PC-3 (cell line): ENCODE measurements at regions of chr7 and their contacts with region 1.

Region 1: DNA sequence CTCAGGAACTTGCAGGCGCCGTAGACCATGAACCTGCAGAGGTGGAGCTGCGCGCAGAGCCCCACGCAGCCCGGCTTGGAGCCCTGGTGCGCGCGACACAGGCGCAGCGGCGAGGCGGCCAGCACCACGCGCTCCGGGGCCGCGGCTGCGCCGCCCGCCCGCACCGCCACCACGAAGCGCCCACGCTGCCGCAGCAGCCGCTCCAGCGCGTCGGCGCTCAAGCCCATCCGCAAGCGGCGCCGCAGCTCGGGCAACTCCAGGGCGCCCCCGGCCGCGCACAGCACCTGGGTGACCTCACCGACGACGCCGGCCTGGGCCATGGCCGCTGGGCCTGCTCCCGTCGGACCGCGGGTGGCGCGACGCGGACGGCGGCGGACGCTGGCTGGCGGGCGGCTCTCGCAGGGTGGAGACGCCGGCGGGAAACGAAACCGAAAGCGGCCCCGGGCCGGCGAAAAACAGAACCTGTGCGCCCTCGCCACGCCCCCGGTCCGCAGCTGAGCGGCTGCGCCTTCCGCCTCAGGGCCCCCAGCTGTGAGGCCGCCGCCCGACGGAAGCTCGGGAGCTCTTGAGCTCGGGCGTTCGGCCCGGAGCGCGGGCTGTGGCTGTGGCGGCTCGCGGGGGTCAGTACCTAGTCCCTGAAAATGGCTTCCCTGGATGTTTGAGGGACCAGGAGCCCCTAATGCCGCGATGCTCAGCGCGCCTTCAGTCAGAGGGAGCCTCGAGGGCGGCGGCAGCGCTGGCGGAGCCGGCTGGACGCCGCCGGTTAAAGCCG is at the start of gene PARP12:
- DNase-seq: peak; percentile 70
- ATAC-seq: peak; percentile 50
- H3K4me3 ChIP-seq: peak within 1 kb of the TSS; percentile 80
- H3K27ac ChIP-seq: peak within 1 kb of the TSS; percentile 95
- H3K4me1 ChIP-seq: peaks cover 41% of the 10 kb centered on the region
- H3K27me3 ChIP-seq: no peaks in the 10 kb centered on the region
- CTCF ChIP-seq: no peak
- total RNA-seq, gene PARP12: 25.5 and 28.1 TPM in 2 replicates

Region 2: GRCh38 chr7:139936760-139937310 is 125.9 kb before region 1 on chr7:
- CTCF ChIA-PET with region 1: no interaction called
- POLR2A ChIA-PET with region 1: no interaction called
- intact Hi-C with region 1: no loop called
- DNase-seq: peak; percentile 52
- ATAC-seq: peak; percentile 76
- H3K4me3 ChIP-seq: no peak overlapping the region
- H3K27ac ChIP-seq: no peak overlapping the region
- H3K4me1 ChIP-seq: peaks cover 7% of the 10 kb centered on the region
- H3K27me3 ChIP-seq: no peaks in the 10 kb centered on the region
- CTCF ChIP-seq: no peak

Region 3: DNA sequence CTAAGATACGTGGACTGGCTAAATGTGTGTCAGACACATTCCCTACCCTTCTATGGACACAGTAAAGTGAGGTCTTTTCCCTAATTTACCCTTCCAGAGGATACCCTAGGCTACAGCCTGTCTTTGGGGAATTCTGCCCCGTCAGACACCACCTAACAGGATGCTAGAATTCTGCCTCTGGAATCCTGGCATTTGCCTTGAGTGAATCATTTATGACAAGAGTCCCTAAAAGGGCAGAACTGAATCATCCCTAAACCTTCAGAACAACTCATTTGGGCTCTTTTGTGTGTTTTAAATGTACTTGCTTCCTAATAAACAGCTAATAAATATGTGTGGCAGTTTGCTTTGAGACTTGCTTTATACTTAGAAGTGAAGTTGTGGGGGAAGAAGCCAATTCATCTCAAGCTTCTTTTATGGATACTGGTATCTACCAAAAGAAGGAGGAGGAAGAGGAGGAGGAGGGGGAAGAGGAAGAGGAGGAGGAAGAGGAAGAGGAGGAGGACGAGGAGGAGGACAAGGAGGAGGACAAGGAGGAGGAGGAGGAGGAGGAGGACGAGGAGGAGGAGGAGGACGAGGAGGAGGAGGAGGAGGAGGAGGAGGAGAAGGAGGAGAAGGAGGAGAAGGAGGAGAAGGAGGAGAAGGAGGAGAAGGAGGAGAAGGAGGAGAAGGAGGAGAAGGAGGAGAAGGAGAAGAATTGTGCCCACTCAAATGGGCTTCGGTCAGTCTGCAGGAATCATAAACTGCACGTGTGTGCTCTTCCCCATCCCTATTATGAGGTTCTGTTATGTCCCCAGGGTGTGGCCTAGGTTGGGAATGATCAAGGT is 27.1 kb before region 1 on chr7:
- CTCF ChIA-PET with region 1: no interaction called
- POLR2A ChIA-PET with region 1: no interaction called
- intact Hi-C with region 1: loop called (anchors 1 kb)
- DNase-seq: peak; percentile 89
- ATAC-seq: peak; percentile 86
- H3K4me3 ChIP-seq: no peak overlapping the region
- H3K27ac ChIP-seq: peak overlapping the region; percentile 45
- H3K4me1 ChIP-seq: peaks cover 33% of the 10 kb centered on the region
- H3K27me3 ChIP-seq: no peaks in the 10 kb centered on the region
- CTCF ChIP-seq: no peak

Region 4: GRCh38 chr7:140121326-140121725 is 58.6 kb after region 1 on chr7:
- CTCF ChIA-PET with region 1: no interaction called
- POLR2A ChIA-PET with region 1: no interaction called
- intact Hi-C with region 1: no loop called
- DNase-seq: no peak
- ATAC-seq: no peak
- H3K4me3 ChIP-seq: no peak overlapping the region
- H3K27ac ChIP-seq: no peak overlapping the region
- H3K4me1 ChIP-seq: no peaks in the 10 kb centered on the region
- H3K27me3 ChIP-seq: no peaks in the 10 kb centered on the region
- CTCF ChIP-seq: no peak

Region 5: DNA sequence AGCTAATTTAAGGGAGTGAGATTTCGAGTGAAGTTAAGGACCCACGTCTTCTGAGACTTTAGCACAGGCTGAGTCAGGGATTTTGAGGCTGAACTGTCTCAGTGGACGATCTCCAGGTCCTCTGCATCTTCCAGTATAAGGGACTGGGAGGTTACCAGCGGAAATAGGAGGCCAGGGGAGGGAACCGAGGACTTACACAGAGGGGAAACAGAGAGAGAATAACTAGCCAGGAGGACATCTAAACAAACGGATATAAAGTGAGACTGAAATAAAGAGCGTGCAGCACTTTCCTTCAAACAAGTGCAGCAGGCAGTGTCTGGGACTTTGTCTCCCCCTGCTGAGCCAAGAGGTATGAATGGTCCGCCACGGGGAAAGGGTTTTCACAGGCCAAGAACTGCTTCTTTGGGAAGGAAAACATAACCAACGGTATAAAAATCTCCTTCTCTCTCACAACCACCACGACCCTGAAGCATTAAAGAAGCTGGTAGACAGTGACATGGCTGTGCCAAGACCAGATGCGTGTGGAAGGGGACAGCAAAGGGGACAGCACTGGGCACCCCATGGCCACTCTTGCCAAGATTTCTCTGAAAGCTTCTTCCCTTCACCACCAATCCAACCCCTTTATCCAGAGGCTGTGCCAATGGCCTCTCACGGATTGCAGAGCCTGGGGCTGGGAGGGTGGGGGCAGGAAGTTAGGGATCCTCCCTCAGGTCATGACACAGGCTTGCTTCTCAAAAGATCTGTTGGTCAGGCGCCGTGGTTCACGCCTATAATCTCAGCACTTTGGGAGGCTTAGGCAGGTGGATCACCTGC is 263.6 kb after region 1 on chr7:
- CTCF ChIA-PET with region 1: no interaction called
- POLR2A ChIA-PET with region 1: no interaction called
- intact Hi-C with region 1: loop called (anchors 5 kb)
- DNase-seq: peak; percentile 65
- ATAC-seq: peak; percentile 96
- H3K4me3 ChIP-seq: no peak overlapping the region
- H3K27ac ChIP-seq: no peak overlapping the region
- H3K4me1 ChIP-seq: no peaks in the 10 kb centered on the region
- H3K27me3 ChIP-seq: no peaks in the 10 kb centered on the region
- CTCF ChIP-seq: peak; percentile 86